MCF 10A (cell line): ENCODE measurements at regions of chr12 and their contacts with region 1.

Region 1: DNA sequence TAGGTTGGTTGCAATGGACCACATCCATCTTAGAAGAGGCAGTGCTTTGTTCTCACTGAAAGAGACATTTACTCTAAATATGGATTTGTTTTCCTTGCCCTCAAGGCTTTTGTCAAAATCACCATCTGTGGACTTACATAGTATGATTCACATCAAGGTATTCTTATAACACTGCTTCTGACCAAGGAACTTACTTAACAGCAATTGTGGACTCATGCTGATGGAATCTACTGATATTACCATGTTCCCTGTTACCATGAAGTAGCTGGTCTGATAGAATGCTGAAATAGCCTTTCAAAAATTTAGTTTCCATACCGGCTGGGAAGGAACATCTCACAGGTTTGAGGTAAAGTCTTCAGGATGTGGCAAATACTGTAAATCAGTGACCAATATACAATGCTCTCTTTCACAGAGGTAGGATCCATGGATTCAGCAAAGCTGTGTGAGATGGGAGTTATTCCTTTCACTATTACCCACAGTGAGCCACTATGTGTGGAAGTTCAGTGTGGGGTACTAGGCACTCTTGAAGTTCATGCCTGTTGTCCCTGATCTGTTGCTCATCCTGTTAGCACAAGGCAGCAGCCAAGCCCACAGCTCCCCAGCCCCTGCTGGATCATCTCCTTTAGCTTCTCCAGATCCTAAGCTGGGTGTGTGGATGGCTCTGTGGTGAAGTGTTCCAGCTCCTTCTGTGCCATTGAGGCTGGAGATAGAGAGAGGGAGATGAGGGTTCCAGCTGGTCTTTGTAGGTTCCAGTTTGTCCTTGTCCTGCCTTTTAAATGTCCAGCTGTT is 126.4 kb downstream of the ATP23 start:
- DNase-seq: peak; percentile 89
- H3K4me3 Mint-ChIP-seq: no peak overlapping the region
- H3K27ac Mint-ChIP-seq: peak overlapping the region; percentile 92
- H3K4me1 Mint-ChIP-seq: peaks cover 41% of the 10 kb centered on the region
- H3K27me3 Mint-ChIP-seq: no peaks in the 10 kb centered on the region
- CTCF ChIP-seq: no peak

Region 2: DNA sequence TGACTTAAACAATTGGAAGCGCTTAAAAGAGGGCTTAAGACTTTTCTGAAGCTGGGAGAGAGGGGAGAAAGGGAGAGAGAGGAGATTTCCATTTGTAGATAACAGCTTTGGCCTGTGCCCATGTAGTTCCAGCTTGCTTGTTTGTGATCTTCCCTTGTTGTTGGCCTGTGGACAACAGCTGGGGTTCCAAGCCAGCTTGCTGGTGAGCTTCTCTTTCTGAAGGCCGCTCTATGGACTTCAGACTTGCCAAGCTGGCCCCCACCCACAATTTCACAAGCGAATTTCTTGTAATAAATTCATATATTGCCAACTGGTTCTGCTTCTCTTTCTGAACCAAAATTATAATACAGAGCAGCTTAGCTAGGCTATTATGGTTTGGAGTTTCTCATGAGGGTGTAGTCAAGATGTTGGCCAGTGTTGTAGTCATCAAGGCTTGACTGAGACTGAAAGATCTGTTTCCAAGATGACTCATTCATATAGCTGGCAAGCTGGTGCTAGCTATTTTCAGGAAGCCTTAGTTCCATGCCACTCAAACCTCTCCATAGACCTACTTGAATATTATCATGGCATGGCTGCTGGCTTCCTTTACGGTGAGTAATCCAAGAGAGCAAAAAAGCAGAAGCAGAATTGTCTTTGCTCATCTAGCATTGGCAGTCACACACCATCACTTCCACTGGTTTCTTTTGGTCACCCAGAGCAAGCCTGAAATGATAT is 37.1 kb before region 1 on chr12:
- CTCF ChIA-PET with region 1: no interaction called
- POLR2A ChIA-PET with region 1: interaction called, 5 read pairs
- intact Hi-C with region 1: loop called (anchors 2 kb)
- DNase-seq: peak; percentile 85
- H3K4me3 Mint-ChIP-seq: no peak overlapping the region
- H3K27ac Mint-ChIP-seq: peak overlapping the region; percentile 84
- H3K4me1 Mint-ChIP-seq: peaks cover 32% of the 10 kb centered on the region
- H3K27me3 Mint-ChIP-seq: no peaks in the 10 kb centered on the region
- CTCF ChIP-seq: no peak

Region 3: DNA sequence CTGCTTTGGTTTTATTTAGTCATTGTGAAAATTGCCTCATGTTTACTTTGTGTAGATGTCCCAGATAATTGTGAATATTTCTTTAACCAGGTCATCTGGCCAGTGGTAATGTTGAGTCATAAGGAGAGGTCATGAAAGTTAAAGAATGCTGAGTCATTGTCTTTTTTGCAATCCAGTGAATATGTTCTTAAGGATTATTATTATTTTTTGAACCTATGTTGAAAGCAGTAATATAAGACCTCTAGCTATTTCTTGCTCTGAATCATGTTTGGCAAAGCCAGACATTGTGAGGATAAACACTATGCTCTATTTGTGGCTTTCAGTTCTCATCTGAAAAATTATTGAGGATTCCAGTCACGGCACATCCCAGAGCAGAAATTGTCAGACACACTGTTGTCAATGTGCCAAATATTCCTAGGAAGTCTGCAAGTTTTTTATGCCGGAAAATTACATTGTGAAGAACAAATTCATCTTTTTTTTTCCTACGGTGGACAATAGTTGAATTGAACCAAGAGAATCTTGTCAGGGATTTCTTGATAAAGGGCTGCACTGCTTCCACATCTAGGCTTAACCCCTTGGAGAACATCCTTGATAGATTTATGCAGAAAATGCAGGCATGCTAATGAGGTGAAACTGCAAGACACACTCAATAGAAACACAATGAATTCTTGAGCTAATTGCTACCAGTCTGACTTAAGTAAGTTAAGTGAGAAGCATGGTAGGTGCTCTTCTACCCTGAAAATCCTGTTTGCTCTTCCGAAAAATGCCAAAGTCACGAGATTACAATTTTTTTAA is 243.2 kb after region 1 on chr12:
- CTCF ChIA-PET with region 1: no interaction called
- POLR2A ChIA-PET with region 1: interaction called, 4 read pairs
- intact Hi-C with region 1: loop called (anchors 2 kb)
- DNase-seq: peak; percentile 93
- H3K4me3 Mint-ChIP-seq: peak overlapping the region; percentile 8
- H3K27ac Mint-ChIP-seq: no peak overlapping the region
- H3K4me1 Mint-ChIP-seq: peaks cover 21% of the 10 kb centered on the region
- H3K27me3 Mint-ChIP-seq: no peaks in the 10 kb centered on the region
- CTCF ChIP-seq: no peak